ENCODE measurements at regions of chr1 and their contacts with region 1.

Region 1: GRCh38 chr1:204431310-204432165 is 19.9 kb upstream of the PPP1R15B start:
- DNase-seq: peak; percentile 86
- ATAC-seq: peak; percentile 93
- H3K4me3 Mint-ChIP-seq: no peak overlapping the region
- H3K27ac Mint-ChIP-seq: no peak overlapping the region
- H3K4me1 Mint-ChIP-seq: no peaks in the 10 kb centered on the region
- H3K27me3 Mint-ChIP-seq: no peaks in the 10 kb centered on the region

Region 2: DNA sequence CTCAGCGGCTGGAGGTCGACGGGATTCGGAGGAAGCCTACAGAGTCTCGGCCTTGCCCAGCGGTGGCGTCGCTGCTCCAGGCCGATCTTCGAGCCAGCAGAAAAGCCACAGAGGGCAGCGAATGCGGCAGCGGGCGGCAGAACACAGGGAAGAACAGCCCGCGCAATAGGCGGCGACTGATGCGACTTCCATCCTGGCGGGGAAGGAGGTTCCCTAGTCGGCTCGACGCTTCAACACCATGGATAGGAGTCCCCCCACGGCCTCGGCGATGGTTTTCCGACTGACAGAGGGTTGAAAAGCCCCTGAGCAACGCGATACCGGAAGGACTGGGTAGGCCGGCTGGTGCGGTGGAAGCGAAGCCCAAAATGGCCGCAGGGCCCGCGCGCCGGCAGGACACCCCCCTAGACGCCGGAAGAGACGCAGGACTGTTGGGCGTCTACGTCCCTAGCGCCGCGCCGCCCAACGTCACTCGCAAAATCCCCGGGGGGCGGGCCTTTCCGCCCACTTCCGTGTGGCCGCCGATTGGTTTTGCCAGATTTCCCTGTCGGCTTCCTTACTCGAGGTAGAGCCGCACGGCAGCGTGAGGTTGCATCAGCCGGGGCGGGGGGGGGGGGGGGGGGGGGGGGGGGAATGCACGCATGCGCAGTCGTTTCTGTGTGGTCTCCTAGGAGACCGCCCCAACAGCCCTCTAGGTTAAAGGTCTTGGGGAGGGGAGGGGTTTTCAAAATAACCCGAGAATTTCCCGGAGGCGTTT is 19.9 kb before region 1 on chr1 and contains the start of gene PPP1R15B:
- CTCF ChIA-PET with region 1: interaction called, 49 read pairs
- POLR2A ChIA-PET with region 1: no interaction called
- DNase-seq: peak; percentile 98
- ATAC-seq: peak; percentile 90
- H3K4me3 Mint-ChIP-seq: peak within 1 kb of the TSS; percentile 99
- H3K27ac Mint-ChIP-seq: peak within 1 kb of the TSS; percentile 100
- H3K4me1 Mint-ChIP-seq: peaks cover 12% of the 10 kb centered on the region
- H3K27me3 Mint-ChIP-seq: no peaks in the 10 kb centered on the region
- total RNA-seq, gene PPP1R15B: 64.7 to 66.0 TPM

Region 3: GRCh38 chr1:204417231-204417997 is 14.1 kb before region 1 on chr1:
- CTCF ChIA-PET with region 1: interaction called, 49 read pairs
- POLR2A ChIA-PET with region 1: no interaction called
- DNase-seq: no peak
- ATAC-seq: peak; percentile 43
- H3K4me3 Mint-ChIP-seq: no peak overlapping the region
- H3K27ac Mint-ChIP-seq: no peak overlapping the region
- H3K4me1 Mint-ChIP-seq: peaks cover 35% of the 10 kb centered on the region
- H3K27me3 Mint-ChIP-seq: no peaks in the 10 kb centered on the region

Region 4: DNA sequence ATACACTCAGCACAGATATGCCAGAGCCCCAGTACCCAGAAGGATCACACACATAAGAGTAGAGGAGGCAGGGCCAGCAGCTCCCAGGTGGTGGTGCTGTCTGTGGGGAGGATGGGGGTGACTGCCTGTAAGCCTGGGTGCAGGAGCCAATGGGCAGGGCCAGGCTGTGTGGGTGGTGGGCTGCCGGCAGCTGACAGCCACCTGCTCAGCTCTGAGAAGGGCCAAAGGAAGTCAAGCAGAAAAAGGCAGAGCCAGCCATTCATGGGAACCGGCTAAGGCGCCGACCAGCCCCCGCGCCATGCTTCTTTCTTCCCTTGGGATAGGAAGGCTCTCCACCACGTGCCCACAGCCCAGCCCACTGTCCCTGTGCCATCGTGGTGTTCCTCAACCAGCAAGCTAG is 49.0 kb after region 1 on chr1:
- CTCF ChIA-PET with region 1: interaction called, 15 read pairs
- POLR2A ChIA-PET with region 1: no interaction called
- DNase-seq: no peak
- ATAC-seq: peak; percentile 32
- H3K4me3 Mint-ChIP-seq: no peak overlapping the region
- H3K27ac Mint-ChIP-seq: no peak overlapping the region
- H3K4me1 Mint-ChIP-seq: peaks cover 34% of the 10 kb centered on the region
- H3K27me3 Mint-ChIP-seq: no peaks in the 10 kb centered on the region

Measured in activated CD8-positive, alpha-beta T cell treated with anti-CD3 and anti-CD28 coated beads, Interleukin-2, amount 10 ng/mL, durations not matched to agents 7 days and 5 days (primary cell).